Common myeloid progenitor, CD34-positive (primary cell): ENCODE measurements at regions of chr2 and their contacts with region 1.

Region 1: DNA sequence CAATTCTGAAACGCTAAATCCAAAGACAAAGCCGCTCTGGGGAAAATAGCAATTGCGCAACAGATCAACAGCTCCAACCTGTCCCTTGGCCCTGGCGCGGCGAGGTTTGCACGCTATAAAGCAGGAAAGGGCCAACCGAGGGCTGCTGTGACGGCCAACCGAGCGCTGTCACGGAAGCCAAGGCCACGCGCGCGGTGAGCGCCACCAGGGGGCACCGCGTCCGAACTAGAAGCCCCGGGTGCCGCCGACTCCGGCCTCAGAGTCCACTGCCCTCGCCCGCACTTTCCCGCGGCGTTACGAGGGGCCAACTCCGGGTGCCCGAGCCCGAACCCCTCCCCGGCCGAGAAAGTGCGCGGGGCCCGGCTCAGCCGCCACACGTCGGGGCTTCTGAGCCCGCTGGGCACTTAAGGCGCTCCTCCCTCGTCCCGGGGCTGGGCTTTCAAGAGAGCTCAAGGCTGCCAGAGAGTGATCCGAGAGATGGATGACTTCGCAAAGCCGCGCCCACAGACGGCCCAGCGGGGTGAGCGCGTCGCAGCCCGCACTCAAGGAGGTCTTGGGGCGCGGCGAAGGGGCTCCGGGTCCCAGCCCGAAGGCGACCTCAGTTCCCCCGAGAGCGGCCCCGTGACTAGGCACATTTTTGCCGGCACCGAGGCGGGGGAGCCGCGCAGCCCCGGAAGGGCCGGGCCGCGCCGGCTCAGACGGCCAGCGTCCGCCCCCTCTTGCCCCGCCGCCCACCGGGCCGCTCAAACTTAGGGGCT is 897 bp downstream of the NFE2L2 start:
- DNase-seq: peak; percentile 98 to 99 (median 99)
- H3K4me3 ChIP-seq: peak overlapping the region; percentile 83 to 98 (median 90)
- H3K27ac ChIP-seq: peak overlapping the region; percentile 99 to 100
- H3K4me1 ChIP-seq: peaks cover 29 to 57% (median 44%) of the 10 kb centered on the region in 4 experiments
- H3K27me3 ChIP-seq: no peaks in the 10 kb centered on the region

Region 2: GRCh38 chr2:177229448-177230242 is 34.0 kb before region 1 on chr2:
- CTCF ChIA-PET with region 1: interaction called, 21 read pairs
- POLR2A ChIA-PET with region 1: interaction called, 6 read pairs
- DNase-seq: no peak
- H3K4me3 ChIP-seq: no peak overlapping the region
- H3K27ac ChIP-seq: no peak overlapping the region
- H3K4me1 ChIP-seq: peaks cover 0 to 10% (median 4%) of the 10 kb centered on the region in 4 experiments
- H3K27me3 ChIP-seq: no peaks in the 10 kb centered on the region

Region 3: GRCh38 chr2:177281400-177282180 is 18.0 kb after region 1 on chr2:
- CTCF ChIA-PET with region 1: interaction called, 22 read pairs
- POLR2A ChIA-PET with region 1: interaction called, 3 read pairs
- DNase-seq: peak in 2 of 3 donors; percentile 69 to 70
- H3K4me3 ChIP-seq: no peak overlapping the region
- H3K27ac ChIP-seq: no peak overlapping the region
- H3K4me1 ChIP-seq: peaks cover 0 to 40% (median under 1%) of the 10 kb centered on the region in 4 experiments
- H3K27me3 ChIP-seq: no peaks in the 10 kb centered on the region

Region 4: DNA sequence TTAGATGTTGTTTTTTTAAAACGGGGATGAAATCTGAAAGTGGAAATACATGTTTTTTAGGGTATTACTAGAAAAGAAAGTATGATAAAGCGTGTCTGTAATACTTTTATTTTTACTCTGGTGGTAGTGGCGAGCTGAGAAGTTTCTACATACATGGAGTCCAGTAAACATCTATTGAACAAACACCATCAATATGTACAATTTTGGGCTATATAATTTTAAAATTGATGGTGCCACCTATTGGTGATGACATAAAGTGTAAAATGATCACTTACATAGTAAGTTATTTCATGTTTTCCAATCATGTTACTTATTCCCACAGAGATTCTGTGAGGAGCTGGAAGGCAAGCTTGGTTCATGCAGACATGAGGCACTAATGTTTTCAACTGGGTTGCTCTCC is 32.4 kb after region 1 on chr2:
- CTCF ChIA-PET with region 1: interaction called, 89 read pairs
- POLR2A ChIA-PET with region 1: interaction called, 4 read pairs
- DNase-seq: peak; percentile 50 to 60 (median 58)
- H3K4me3 ChIP-seq: no peak overlapping the region
- H3K27ac ChIP-seq: no peak overlapping the region
- H3K4me1 ChIP-seq: peaks cover 0 to 4% (median 0%) of the 10 kb centered on the region in 4 experiments
- H3K27me3 ChIP-seq: no peaks in the 10 kb centered on the region